Calu3 (cell line): ENCODE measurements at regions of chr4 and their contacts with region 1.

Region 1: GRCh38 chr4:123418351-123418931 is 21.8 kb downstream of the SPRY1 start:
- DNase-seq: peak; percentile 52
- H3K4me3 Mint-ChIP-seq: peak overlapping the region; percentile 15
- H3K27ac Mint-ChIP-seq: peak overlapping the region; percentile 67
- H3K4me1 Mint-ChIP-seq: peaks cover 33% of the 10 kb centered on the region
- H3K27me3 Mint-ChIP-seq: no peaks in the 10 kb centered on the region
- CTCF ChIP-seq: no peak

Region 2: GRCh38 chr4:123083646-123084045 is 334.8 kb before region 1 on chr4:
- CTCF ChIA-PET with region 1: no interaction called
- intact Hi-C with region 1: no loop called
- DNase-seq: no peak
- H3K4me3 Mint-ChIP-seq: no peak overlapping the region
- H3K27ac Mint-ChIP-seq: no peak overlapping the region
- H3K4me1 Mint-ChIP-seq: no peaks in the 10 kb centered on the region
- H3K27me3 Mint-ChIP-seq: no peaks in the 10 kb centered on the region
- CTCF ChIP-seq: no peak

Region 3: GRCh38 chr4:123340381-123340701 is 78.1 kb before region 1 on chr4:
- CTCF ChIA-PET with region 1: no interaction called
- intact Hi-C with region 1: no loop called
- DNase-seq: peak; percentile 8
- H3K4me3 Mint-ChIP-seq: no peak overlapping the region
- H3K27ac Mint-ChIP-seq: peak overlapping the region; percentile 93
- H3K4me1 Mint-ChIP-seq: peaks cover 11% of the 10 kb centered on the region
- H3K27me3 Mint-ChIP-seq: no peaks in the 10 kb centered on the region
- CTCF ChIP-seq: no peak

Region 4: DNA sequence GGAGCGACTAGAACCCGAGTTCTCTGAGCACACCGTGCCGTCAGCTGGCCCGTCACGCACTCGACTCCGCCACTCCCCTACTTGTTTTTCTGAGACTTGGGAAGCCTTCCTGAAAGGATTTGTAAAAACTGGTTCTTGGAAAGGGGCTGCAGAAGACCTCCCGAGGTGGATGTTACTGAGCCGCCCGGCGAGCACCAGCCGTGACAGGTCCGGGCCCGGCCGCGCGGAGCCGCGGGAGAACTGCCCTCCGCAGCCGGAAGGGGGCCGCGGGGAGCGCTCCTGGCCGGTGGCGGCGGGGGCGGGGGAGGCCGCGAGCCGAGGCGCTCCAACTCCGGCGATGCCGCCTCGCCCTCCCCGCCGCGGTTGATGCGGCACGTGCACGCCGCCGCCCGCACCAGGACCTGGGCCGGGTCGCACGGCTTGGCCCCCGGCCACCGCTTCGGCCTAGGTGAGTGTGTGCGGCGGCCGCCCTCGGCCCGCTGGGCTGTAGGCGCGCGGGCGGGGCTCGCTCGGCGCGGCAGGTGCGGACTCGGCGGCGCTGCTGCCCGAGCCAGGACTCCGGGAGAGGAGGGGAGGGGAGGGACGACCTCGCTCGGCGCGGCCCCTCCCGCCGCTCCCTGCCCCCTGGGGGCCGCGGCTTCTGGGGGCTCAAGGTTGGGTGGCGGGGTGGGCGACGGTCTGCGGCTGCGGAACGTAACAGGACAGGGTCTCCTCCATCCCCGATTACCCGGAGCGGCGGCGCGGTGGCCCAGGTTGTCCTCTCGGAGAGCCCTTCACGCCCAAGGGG is 20.2 kb before region 1 on chr4:
- CTCF ChIA-PET with region 1: no interaction called
- intact Hi-C with region 1: loop called (anchors 2 kb)
- DNase-seq: peak; percentile 82
- H3K4me3 Mint-ChIP-seq: peak overlapping the region; percentile 82
- H3K27ac Mint-ChIP-seq: peak overlapping the region; percentile 92
- H3K4me1 Mint-ChIP-seq: peaks cover 23% of the 10 kb centered on the region
- H3K27me3 Mint-ChIP-seq: no peaks in the 10 kb centered on the region
- CTCF ChIP-seq: peak; percentile 46

Region 5: GRCh38 chr4:123444290-123444731 is 25.9 kb after region 1 on chr4:
- CTCF ChIA-PET with region 1: no interaction called
- intact Hi-C with region 1: no loop called
- DNase-seq: peak; percentile 19
- H3K4me3 Mint-ChIP-seq: no peak overlapping the region
- H3K27ac Mint-ChIP-seq: no peak overlapping the region
- H3K4me1 Mint-ChIP-seq: peaks cover 5% of the 10 kb centered on the region
- H3K27me3 Mint-ChIP-seq: no peaks in the 10 kb centered on the region
- CTCF ChIP-seq: no peak

Region 6: DNA sequence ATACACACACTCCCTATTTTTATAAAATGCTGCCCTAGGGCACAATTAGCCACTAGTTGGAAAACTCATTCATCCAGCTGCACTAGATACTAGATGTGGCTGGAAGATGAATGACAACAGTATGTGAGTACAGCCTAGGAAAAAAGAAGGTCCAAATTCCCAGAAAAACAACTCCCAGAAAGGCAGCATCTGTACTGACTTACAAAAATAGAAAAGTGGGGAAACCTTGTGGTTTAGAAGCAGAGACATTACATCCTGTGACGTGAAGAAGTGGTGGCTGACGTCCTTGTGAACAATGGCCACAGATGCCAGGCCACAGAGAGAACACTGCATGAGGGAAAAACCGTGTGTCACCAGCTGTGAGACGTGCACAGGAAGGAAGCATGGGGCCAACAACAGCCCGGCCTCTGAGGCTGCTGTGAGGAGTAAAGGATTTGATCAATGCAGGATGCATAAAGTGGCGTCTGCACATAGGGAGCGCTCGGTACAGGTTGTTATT is 59.3 kb after region 1 on chr4:
- CTCF ChIA-PET with region 1: no interaction called
- intact Hi-C with region 1: loop called (anchors 5 kb)
- DNase-seq: no peak
- H3K4me3 Mint-ChIP-seq: no peak overlapping the region
- H3K27ac Mint-ChIP-seq: no peak overlapping the region
- H3K4me1 Mint-ChIP-seq: peaks cover 37% of the 10 kb centered on the region
- H3K27me3 Mint-ChIP-seq: no peaks in the 10 kb centered on the region
- CTCF ChIP-seq: no peak

Region 7: GRCh38 chr4:123555233-123555806 is 136.9 kb after region 1 on chr4:
- CTCF ChIA-PET with region 1: no interaction called
- intact Hi-C with region 1: loop called (anchors 5 kb)
- DNase-seq: peak; percentile 88
- H3K4me3 Mint-ChIP-seq: peak overlapping the region; percentile 55
- H3K27ac Mint-ChIP-seq: peak overlapping the region; percentile 90
- H3K4me1 Mint-ChIP-seq: peaks cover 67% of the 10 kb centered on the region
- H3K27me3 Mint-ChIP-seq: no peaks in the 10 kb centered on the region
- CTCF ChIP-seq: no peak

Region 8: GRCh38 chr4:123744664-123745290 is 326.3 kb after region 1 on chr4:
- CTCF ChIA-PET with region 1: no interaction called
- intact Hi-C with region 1: no loop called
- DNase-seq: no peak
- H3K4me3 Mint-ChIP-seq: no peak overlapping the region
- H3K27ac Mint-ChIP-seq: no peak overlapping the region
- H3K4me1 Mint-ChIP-seq: peaks cover 8% of the 10 kb centered on the region
- H3K27me3 Mint-ChIP-seq: no peaks in the 10 kb centered on the region
- CTCF ChIP-seq: no peak